Heart left ventricle (tissue), 16 donors: ENCODE measurements at regions of chr6 and their contacts with region 1.

Region 1: GRCh38 chr6:68634726-68635411 is at the start of gene ADGRB3:
- DNase-seq: peak; percentile 83 to 91 (median 85)
- ATAC-seq: peak; percentile 84 to 97 (median 93)
- H3K4me3 ChIP-seq: peak within 1 kb of the TSS; percentile 33 to 77 (median 69)
- H3K27ac ChIP-seq: peak within 1 kb of the TSS; percentile 37 to 85 (median 74)
- H3K4me1 ChIP-seq: peaks cover 0 to 21% (median 0%) of the 10 kb centered on the region in 12 donors
- H3K27me3 ChIP-seq: peaks cover 0 to 21% (median 17%) of the 10 kb centered on the region in 9 donors
- CTCF ChIP-seq: peak in 5 of 12 donors; percentile 4 to 33 (median 20)
- POLR2A ChIP-seq: peak in 1 of 2 donors; percentile 41
- total RNA-seq, gene ADGRB3: 0.51 to 2.5 (median 1.1) TPM

Region 2: DNA sequence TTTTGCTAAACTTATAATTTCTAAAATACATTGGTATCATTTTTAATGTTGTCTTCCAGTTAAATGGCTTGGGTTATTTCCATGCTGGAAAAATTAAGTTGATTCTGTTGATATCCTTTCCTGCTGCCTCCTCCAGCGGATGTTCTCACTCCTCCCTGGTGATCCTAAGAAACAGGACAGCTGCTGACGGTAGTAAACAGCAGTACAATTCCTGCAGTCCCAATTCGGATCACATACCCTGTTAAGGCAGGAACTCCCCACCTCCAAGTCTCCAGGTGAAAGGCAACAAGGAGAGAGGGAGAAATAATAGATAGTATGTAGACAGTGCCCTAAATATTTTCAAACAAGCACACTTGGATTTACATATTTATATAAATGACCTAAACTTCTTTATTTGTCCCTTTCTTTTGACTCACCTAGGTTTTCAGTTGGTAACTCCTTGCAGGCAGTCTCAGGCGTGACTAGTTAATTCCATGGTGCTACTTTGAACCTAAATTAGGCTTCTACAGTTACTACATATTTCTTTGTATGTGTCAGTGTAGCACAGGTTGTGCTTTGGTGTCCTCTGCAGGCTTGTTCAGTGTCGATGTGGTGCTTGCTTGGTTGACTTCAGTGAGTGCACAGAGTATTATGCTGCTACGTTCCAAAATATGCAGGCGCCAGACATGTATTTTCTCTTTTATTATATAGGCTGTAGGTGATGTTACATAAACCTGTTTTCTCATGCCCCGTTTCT is 126.2 kb after region 1 on chr6:
- intact Hi-C with region 1: loop called in 2 of 10 experiments (anchors 5 kb)
- DNase-seq: no peak
- ATAC-seq: peak; percentile 37 to 73 (median 58)
- H3K4me3 ChIP-seq: no peak overlapping the region
- H3K27ac ChIP-seq: peak overlapping the region in 1 of 12 donors; percentile 17
- H3K4me1 ChIP-seq: peaks cover 0 to 10% (median 0%) of the 10 kb centered on the region in 12 donors
- H3K27me3 ChIP-seq: no peaks in the 10 kb centered on the region
- CTCF ChIP-seq: peak in 3 of 12 donors; percentile 7 to 37 (median 11)
- POLR2A ChIP-seq: no peak

Region 3: DNA sequence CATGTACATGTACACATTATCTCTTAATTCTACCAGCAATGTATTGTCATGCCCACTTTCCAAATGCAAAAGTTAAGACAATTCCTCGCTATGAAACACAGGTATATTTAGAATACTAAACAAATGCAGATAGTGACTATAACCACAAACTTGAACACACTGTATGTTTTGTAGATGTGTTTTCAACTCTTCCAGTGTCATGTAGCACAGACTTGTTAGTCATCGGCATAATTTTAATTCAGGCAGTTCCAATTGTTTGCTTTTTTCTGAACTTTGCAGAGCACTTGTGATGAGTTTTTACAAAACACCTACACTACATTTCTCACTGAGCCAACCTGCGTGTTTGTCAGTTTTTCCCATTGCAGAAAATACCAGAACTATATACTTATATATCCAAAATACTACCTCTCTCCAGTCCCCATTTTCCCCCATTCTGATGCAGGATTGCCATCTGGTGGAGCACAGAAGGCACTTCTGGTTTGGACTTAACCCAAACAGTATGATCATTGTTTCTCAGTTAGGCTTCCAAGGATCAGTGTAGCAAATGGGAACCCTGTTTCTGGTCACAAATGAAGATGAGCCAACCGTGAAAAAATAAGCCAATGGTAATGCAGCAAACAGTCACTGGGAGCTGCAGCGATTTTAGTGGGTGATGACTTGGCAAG is 143.6 kb after region 1 on chr6:
- intact Hi-C with region 1: loop called (anchors 1 to 5 kb)
- DNase-seq: peak in 4 of 5 donors; percentile 10 to 29 (median 24)
- ATAC-seq: peak in 3 of 4 donors; percentile 70 to 84 (median 71)
- H3K4me3 ChIP-seq: no peak overlapping the region
- H3K27ac ChIP-seq: no peak overlapping the region
- H3K4me1 ChIP-seq: peaks cover 0 to 5% (median 0%) of the 10 kb centered on the region in 12 donors
- H3K27me3 ChIP-seq: no peaks in the 10 kb centered on the region
- CTCF ChIP-seq: peak; percentile 44 to 75 (median 56)
- POLR2A ChIP-seq: no peak

Region 4: GRCh38 chr6:68958327-68958726 is 323.5 kb after region 1 on chr6:
- intact Hi-C with region 1: loop called in 3 of 10 experiments (anchors 10 kb)
- DNase-seq: no peak
- ATAC-seq: no peak
- H3K4me3 ChIP-seq: no peak overlapping the region
- H3K27ac ChIP-seq: no peak overlapping the region
- H3K4me1 ChIP-seq: no peaks in the 10 kb centered on the region
- H3K27me3 ChIP-seq: no peaks in the 10 kb centered on the region
- CTCF ChIP-seq: peak in 5 of 12 donors; percentile 18 to 37 (median 35)
- POLR2A ChIP-seq: no peak

Region 5: GRCh38 chr6:68967549-68968300 is 332.9 kb after region 1 on chr6:
- intact Hi-C with region 1: loop called in 5 of 10 experiments (anchors 5 to 10 kb)
- DNase-seq: peak in 4 of 5 donors; percentile 47 to 63 (median 51)
- ATAC-seq: peak in 3 of 4 donors; percentile 57 to 74 (median 63)
- H3K4me3 ChIP-seq: no peak overlapping the region
- H3K27ac ChIP-seq: no peak overlapping the region
- H3K4me1 ChIP-seq: peaks cover 0 to 5% (median 0%) of the 10 kb centered on the region in 12 donors
- H3K27me3 ChIP-seq: no peaks in the 10 kb centered on the region
- CTCF ChIP-seq: peak; percentile 79 to 92 (median 88)
- POLR2A ChIP-seq: no peak